ENCODE measurements at regions of chr1 and their contacts with region 1.

Region 1: DNA sequence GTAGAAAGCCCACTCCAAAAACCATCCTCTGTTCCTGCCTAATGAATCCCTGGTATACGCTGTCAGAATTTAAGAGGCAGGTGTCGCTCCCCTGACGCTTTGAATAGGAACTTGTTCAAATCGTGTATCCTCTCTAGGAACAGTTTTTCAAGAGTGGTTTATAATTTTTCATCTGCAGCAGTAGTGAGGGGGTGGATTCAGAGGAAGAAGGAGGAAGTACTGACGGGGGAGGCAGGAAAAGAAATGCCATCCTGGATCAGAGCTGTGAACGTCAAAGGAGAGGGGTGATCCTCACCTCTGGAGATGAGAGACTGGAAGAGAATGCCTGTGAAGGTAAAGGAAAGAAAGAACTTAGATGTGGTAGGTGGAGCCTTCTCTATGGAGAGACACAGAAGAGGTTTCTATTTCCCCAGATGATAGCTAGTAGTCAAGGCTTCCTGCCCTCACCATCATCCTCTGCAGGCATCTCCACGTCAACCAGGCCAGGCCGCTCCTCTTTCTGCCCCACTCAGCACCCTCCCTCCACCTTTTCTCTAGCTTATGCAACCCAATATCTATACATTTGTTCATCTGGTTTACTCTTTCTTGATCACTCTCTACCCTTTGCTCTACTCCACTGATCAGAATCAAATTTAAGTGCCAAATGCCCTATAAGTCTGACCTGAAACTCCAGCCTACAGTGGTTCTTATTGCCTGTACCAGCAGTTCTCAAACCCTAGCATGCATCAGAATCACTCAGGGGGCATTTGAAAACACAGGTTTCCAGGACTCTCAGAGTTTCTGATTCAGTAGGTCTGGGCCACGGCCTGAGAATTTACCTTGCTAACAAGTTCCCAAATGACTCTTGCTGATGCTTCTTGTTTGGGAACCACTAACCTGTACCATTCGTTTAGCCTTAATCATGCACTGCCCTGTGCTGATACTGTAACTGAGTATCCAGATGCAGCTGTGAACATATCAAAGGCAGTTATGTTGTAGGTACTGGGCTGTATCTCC is 13.1 kb upstream of the BCL9 start:
- DNase-seq: peak in 3 of 9 experiments; percentile 10 to 41 (median 21)
- ATAC-seq: peak; percentile 81
- H3K4me3 ChIP-seq: no peak overlapping the region
- H3K4me3 Mint-ChIP-seq: no peak overlapping the region
- H3K27ac ChIP-seq: no peak overlapping the region
- H3K27ac Mint-ChIP-seq: no peak overlapping the region
- H3K4me1 ChIP-seq: peaks cover 11% of the 10 kb centered on the region
- H3K4me1 Mint-ChIP-seq: peaks cover 2% of the 10 kb centered on the region
- H3K27me3 ChIP-seq: peaks cover 0 to 3% of the 10 kb centered on the region in 2 experiments
- H3K27me3 Mint-ChIP-seq: no peaks in the 10 kb centered on the region
- CTCF ChIP-seq: no peak

Region 2: GRCh38 chr1:147515046-147515869 is 13.0 kb before region 1 on chr1:
- CTCF ChIA-PET with region 1: interaction called, 11 read pairs
- POLR2A ChIA-PET with region 1: no interaction called
- intact Hi-C with region 1: no loop called
- DNase-seq: peak in 2 of 9 experiments; percentile 47 to 60
- ATAC-seq: peak; percentile 65
- H3K4me3 ChIP-seq: no peak overlapping the region
- H3K4me3 Mint-ChIP-seq: no peak overlapping the region
- H3K27ac ChIP-seq: no peak overlapping the region
- H3K27ac Mint-ChIP-seq: no peak overlapping the region
- H3K4me1 ChIP-seq: no peaks in the 10 kb centered on the region
- H3K4me1 Mint-ChIP-seq: peaks cover 4% of the 10 kb centered on the region
- H3K27me3 ChIP-seq: no peaks in the 10 kb centered on the region
- H3K27me3 Mint-ChIP-seq: peaks cover 9% of the 10 kb centered on the region
- CTCF ChIP-seq: peak; percentile 33